ENCODE measurements at regions of chr20 and their contacts with region 1.

Region 1: GRCh38 chr20:6828794-6829423 is 61.4 kb downstream of the BMP2 start:
- DNase-seq: peak; percentile 49
- H3K4me3 Mint-ChIP-seq: no peak overlapping the region
- H3K27ac Mint-ChIP-seq: no peak overlapping the region
- H3K4me1 Mint-ChIP-seq: no peaks in the 10 kb centered on the region
- H3K27me3 Mint-ChIP-seq: no peaks in the 10 kb centered on the region
- CTCF ChIP-seq: peak; percentile 52

Region 2: DNA sequence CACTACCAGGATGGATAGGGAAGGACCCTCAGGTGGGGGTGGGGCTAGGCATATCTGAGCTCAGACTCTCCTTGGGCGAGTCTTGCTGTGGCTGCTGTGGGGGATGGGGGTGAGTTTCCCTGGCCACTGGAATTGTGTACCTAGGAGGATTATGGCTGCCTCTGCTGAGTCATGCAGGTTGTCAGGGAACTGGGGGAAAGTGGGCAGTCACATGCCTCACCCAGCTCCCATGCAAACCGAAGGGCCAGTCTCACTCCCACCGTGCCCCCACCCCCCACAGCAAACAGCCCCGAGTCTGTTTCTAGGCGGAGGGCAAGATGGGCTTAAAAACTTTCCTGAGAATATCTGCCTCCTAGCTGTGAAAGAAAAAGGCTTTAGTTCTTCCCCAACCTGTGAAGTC is 495.8 kb before region 1 on chr20:
- CTCF ChIA-PET with region 1: no interaction called
- intact Hi-C with region 1: no loop called
- DNase-seq: no peak
- H3K4me3 Mint-ChIP-seq: no peak overlapping the region
- H3K27ac Mint-ChIP-seq: no peak overlapping the region
- H3K4me1 Mint-ChIP-seq: no peaks in the 10 kb centered on the region
- H3K27me3 Mint-ChIP-seq: peaks cover 17% of the 10 kb centered on the region
- CTCF ChIP-seq: no peak

Region 3: GRCh38 chr20:6784210-6784611 is 44.7 kb before region 1 on chr20:
- CTCF ChIA-PET with region 1: no interaction called
- intact Hi-C with region 1: no loop called
- DNase-seq: no peak
- H3K4me3 Mint-ChIP-seq: no peak overlapping the region
- H3K27ac Mint-ChIP-seq: no peak overlapping the region
- H3K4me1 Mint-ChIP-seq: peaks cover 7% of the 10 kb centered on the region
- H3K27me3 Mint-ChIP-seq: no peaks in the 10 kb centered on the region
- CTCF ChIP-seq: no peak

Region 4: DNA sequence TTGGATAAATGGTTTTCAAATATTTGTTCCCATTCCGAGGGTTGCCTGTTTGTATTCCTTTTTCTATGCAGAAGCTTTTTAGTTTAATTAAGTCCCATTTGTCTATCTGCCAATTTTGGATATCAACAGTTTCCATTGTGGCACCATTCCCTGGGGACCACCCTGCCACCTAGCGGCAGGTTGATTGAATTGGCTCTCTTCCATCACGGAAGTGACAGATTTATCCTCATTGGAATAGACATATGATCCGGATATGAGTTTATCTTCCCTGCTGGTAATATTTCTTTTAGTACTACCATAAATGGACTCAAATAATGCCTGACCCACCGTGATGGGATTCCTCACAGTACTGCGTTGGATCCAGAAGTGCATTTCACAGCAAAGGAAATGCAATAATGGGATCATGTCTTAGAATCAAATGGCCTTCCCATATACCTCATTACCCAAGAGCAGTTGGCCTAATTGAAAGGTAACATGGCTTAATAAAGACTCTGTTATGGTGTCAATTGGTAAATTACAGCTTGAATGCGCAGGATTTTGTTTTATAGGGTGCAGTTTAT is 265.6 kb after region 1 on chr20:
- CTCF ChIA-PET with region 1: no interaction called
- intact Hi-C with region 1: loop called (anchors 1 kb)
- DNase-seq: peak; percentile 60
- H3K4me3 Mint-ChIP-seq: no peak overlapping the region
- H3K27ac Mint-ChIP-seq: no peak overlapping the region
- H3K4me1 Mint-ChIP-seq: no peaks in the 10 kb centered on the region
- H3K27me3 Mint-ChIP-seq: no peaks in the 10 kb centered on the region
- CTCF ChIP-seq: peak; percentile 57

Region 5: DNA sequence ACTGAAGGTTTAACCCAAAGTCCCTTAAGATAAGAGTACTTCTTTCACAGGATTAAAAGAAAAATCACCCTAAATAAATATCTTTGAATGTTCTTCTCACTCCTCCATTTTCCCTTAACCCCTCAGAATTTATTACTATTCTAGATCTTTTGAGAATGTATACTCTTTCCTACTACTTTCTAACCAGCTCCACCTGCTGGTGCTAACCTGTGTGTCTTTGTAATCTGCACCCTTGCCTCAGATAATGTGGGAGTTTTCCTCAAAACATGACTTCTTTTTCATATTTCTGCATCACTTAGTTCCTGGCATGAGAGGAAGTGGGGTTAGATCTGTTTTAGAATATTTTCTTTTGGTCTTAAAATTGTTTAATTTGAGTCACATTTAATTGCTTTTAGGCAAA is 332.8 kb after region 1 on chr20:
- CTCF ChIA-PET with region 1: no interaction called
- intact Hi-C with region 1: loop called (anchors 5 kb)
- DNase-seq: peak; percentile 13
- H3K4me3 Mint-ChIP-seq: no peak overlapping the region
- H3K27ac Mint-ChIP-seq: no peak overlapping the region
- H3K4me1 Mint-ChIP-seq: peaks cover 4% of the 10 kb centered on the region
- H3K27me3 Mint-ChIP-seq: no peaks in the 10 kb centered on the region
- CTCF ChIP-seq: no peak

Region 6: DNA sequence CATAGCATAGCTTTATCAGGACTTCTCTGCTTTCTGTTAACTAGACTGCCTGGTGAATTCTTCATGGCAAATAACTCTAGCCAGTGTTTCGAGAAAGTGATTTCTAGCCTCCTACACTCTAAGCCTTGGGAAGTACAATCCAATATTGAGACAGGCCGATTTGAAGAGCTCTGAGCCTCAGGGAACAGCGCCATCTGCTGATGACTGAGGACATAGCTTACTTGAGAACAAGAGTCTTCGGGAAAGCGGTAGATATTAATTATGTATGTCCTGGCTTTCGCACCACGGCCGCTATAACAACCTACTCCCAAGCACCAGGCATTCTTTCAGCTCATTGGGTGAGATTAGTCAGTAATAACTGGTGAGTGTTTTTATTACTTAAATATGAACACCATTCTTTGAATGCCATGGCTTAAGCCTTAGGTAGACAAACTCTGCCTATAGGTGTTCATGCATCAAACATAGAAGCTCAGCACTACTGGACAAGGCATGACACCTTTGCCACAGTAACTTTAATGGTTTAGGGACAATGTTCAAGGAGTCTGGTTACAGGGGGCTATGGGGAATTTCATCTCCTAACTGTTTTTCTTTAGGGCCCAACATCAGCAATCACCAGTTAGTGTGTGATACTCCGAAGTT is 457.1 kb after region 1 on chr20:
- CTCF ChIA-PET with region 1: interaction called, 4 read pairs
- intact Hi-C with region 1: loop called (anchors 5 kb)
- DNase-seq: peak; percentile 60
- H3K4me3 Mint-ChIP-seq: no peak overlapping the region
- H3K27ac Mint-ChIP-seq: no peak overlapping the region
- H3K4me1 Mint-ChIP-seq: peaks cover under 1% of the 10 kb centered on the region
- H3K27me3 Mint-ChIP-seq: no peaks in the 10 kb centered on the region
- CTCF ChIP-seq: peak; percentile 61

Measured in Calu3 (cell line).